Common myeloid progenitor, CD34-positive (primary cell): ENCODE measurements at regions of chr18 and their contacts with region 1.

Region 1: DNA sequence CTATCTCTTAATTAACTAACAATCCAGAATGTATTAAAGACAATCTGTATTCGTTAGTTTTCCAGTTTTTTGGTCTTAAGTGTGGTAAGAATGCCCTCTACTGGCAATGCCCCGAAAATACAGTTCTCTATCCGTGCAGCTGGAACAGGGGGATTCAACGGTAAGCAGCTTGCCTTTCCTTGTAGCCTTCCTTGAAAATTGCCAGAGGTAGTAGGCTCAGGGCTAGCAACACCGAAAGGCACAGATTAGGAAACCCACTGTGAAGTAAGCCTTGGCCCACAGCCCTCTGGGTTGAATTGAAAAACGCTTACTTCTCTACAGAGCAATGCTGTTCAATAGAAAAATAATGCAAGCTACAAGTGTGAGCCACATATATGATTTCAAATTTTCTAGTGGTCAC is 17.1 kb upstream of the VPS4B start:
- DNase-seq: peak; percentile 70 to 82 (median 79)
- H3K4me3 ChIP-seq: no peak overlapping the region
- H3K27ac ChIP-seq: no peak overlapping the region
- H3K4me1 ChIP-seq: peaks cover 0 to 3% (median under 1%) of the 10 kb centered on the region in 4 experiments
- H3K27me3 ChIP-seq: no peaks in the 10 kb centered on the region

Region 2: GRCh38 chr18:63339920-63340484 is 99.3 kb before region 1 on chr18:
- CTCF ChIA-PET with region 1: interaction called, 66 read pairs
- POLR2A ChIA-PET with region 1: interaction called, 3 read pairs
- DNase-seq: peak; percentile 70 to 84 (median 78)
- H3K4me3 ChIP-seq: no peak overlapping the region
- H3K27ac ChIP-seq: no peak overlapping the region
- H3K4me1 ChIP-seq: no peaks in the 10 kb centered on the region
- H3K27me3 ChIP-seq: no peaks in the 10 kb centered on the region

Region 3: GRCh38 chr18:63366213-63367052 is 72.9 kb before region 1 on chr18:
- CTCF ChIA-PET with region 1: interaction called, 15 read pairs
- POLR2A ChIA-PET with region 1: no interaction called
- DNase-seq: peak; percentile 37 to 81 (median 73)
- H3K4me3 ChIP-seq: peak overlapping the region; percentile 74 to 99 (median 92)
- H3K27ac ChIP-seq: peak overlapping the region in 1 of 2 experiments; percentile 84
- H3K4me1 ChIP-seq: peaks cover 5 to 26% (median 20%) of the 10 kb centered on the region in 4 experiments
- H3K27me3 ChIP-seq: no peaks in the 10 kb centered on the region

Region 4: GRCh38 chr18:63422087-63422809 is 17.1 kb before region 1 on chr18 and contains the start of gene VPS4B:
- CTCF ChIA-PET with region 1: interaction called, 54 read pairs
- POLR2A ChIA-PET with region 1: interaction called, 3 read pairs
- DNase-seq: peak; percentile 100
- H3K4me3 ChIP-seq: peak within 1 kb of the TSS; percentile 82 to 100 (median 97)
- H3K27ac ChIP-seq: peak within 1 kb of the TSS; percentile 84 to 96
- H3K4me1 ChIP-seq: peaks cover 6 to 18% (median 14%) of the 10 kb centered on the region in 4 experiments
- H3K27me3 ChIP-seq: no peaks in the 10 kb centered on the region